A549 (cell line): ENCODE measurements at regions of chr15 and their contacts with region 1.

Region 1: DNA sequence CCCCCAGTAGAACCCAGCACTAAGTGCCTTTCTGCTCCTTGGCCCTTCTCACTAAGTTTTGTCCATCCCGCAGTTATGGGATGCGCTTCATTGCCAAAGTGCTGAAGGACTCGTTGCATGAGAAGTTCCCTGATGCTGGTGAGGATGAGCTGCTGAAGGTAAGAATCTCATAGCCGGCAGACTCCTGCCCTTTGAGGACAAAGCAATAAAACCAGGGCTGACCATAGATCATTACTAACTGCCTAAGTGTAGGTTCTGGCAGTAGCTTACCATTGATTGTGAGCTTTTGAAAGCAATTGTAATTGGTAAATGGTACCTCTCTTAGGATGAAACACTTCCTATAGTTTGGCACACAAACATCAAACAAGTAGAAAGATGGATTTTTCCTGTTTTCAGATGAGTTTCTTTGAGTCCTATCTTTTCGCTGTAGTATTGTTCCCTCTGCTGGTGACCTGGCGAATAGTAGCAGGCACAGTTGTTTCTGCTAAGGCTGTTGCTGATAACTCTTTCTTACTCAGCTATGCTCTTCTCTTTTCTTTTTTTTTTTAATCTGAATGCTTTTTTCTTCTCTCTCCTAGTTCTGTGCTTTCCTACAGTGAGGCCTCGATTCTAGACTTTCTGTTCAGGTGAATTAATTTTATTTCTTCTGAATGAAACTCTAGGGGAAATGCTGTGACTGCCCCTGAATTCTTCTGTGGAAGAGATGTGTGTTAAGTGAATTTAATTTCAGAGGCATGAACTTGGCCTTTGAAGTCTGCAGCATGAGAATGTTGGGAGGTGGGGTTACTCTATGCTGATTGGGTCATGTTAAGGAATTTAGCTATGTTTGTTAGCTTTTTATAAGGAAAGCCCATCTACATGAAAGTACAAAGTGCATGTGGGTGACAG is 47.4 kb upstream of the CRTC3 start:
- DNase-seq: peak; percentile 35 to 64
- ATAC-seq: peak; percentile 83 to 87; a peak in 5 of 6 replicates
- H3K4me3 ChIP-seq: no peak overlapping the region
- H3K27ac ChIP-seq: no peak overlapping the region
- H3K4me1 ChIP-seq: no peaks in the 10 kb centered on the region
- CTCF ChIP-seq: peak; percentile 98
- EP300 ChIP-seq: no peak
- POLR2A ChIP-seq: no peak
- RAD21 ChIP-seq: peak; percentile 98

Region 2: GRCh38 chr15:90143166-90143655 is 339.2 kb before region 1 on chr15:
- CTCF ChIA-PET with region 1: interaction called, 12 read pairs
- POLR2A ChIA-PET with region 1: no interaction called
- DNase-seq: peak; percentile 88 to 91
- ATAC-seq: peak; percentile 99
- H3K4me3 ChIP-seq: no peak overlapping the region
- H3K27ac ChIP-seq: peak overlapping the region; percentile 58 to 82
- H3K4me1 ChIP-seq: peaks cover 14% of the 10 kb centered on the region
- CTCF ChIP-seq: peak; percentile 99
- EP300 ChIP-seq: no peak
- POLR2A ChIP-seq: no peak
- RAD21 ChIP-seq: peak; percentile 99 to 100

Region 3: DNA sequence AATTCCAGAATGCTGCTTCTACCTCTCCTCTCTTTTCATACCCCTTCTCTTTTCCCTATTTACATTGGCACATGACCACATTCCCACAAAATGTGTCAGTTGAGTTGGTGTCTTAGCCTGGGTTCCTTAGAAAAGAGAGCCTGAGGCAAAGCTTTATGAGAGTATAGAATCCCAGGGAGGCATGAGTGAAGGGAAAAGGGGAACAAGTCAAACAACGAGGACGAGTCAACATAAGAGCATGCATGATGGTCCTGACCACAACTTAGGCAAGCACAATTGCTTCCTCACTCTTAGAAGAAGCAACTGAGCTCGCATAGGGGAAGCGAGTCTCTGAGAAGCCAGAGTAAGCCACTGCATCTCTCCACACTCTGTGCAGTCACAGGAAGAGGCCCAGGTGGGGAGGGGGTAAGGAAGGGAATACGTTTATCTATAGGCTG is 145.6 kb before region 1 on chr15:
- CTCF ChIA-PET with region 1: interaction called, 29 read pairs
- POLR2A ChIA-PET with region 1: no interaction called
- DNase-seq: peak in 1 of 2 experiments; percentile 69
- ATAC-seq: peak; percentile 60 to 86
- H3K4me3 ChIP-seq: no peak overlapping the region
- H3K27ac ChIP-seq: peak overlapping the region; percentile 39 to 63; a peak in 4 of 6 replicates
- H3K4me1 ChIP-seq: peaks cover 17% of the 10 kb centered on the region
- CTCF ChIP-seq: no peak
- EP300 ChIP-seq: no peak
- POLR2A ChIP-seq: no peak
- RAD21 ChIP-seq: no peak

Region 4: DNA sequence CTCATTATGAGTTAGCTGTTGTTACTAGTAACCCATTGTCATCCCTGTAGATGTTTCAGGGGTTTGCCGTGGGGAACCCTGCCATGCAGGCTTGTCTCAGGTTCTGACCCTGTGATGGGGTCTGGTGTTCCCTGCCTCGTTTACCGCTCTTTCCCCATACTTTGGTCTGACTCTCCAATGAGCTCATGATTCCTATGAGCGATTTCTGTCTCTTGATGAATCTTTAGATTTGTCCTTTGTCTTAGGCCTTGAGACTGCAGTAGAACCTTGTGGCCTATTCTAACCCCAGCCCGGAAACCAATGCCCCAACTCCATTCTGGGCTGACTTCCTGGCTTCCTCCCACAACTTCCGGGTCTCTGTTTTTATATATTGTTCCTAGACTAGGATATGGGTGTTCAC is 105.6 kb before region 1 on chr15:
- CTCF ChIA-PET with region 1: interaction called, 20 read pairs
- POLR2A ChIA-PET with region 1: no interaction called
- DNase-seq: no peak
- ATAC-seq: no peak
- H3K4me3 ChIP-seq: no peak overlapping the region
- H3K27ac ChIP-seq: no peak overlapping the region
- H3K4me1 ChIP-seq: peaks cover 3% of the 10 kb centered on the region; the same call in 1 of the 3 replicates
- CTCF ChIP-seq: no peak
- EP300 ChIP-seq: no peak
- POLR2A ChIP-seq: no peak
- RAD21 ChIP-seq: no peak

Region 5: DNA sequence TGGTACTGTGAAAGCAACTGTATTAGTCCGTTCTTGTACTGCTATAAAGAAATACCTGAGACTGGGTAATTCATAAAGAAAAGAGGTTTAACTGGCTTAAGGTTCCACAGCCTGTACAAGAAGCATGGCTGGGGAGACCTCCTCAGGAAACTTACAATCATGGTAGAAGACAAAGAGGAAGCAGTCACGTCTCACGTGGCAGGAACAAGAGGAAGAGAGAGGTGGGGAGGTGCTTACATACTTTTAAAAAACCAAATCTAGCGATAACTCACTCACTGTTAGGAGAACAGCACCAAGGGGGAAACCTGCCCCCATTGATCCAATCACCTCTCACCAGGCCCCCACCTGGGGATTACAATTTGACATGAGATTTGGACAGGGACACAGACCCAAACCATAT is 45.4 kb before region 1 on chr15:
- CTCF ChIA-PET with region 1: interaction called, 17 read pairs
- POLR2A ChIA-PET with region 1: no interaction called
- DNase-seq: no peak
- ATAC-seq: no peak
- H3K4me3 ChIP-seq: no peak overlapping the region
- H3K27ac ChIP-seq: no peak overlapping the region
- H3K4me1 ChIP-seq: no peaks in the 10 kb centered on the region
- CTCF ChIP-seq: no peak
- EP300 ChIP-seq: no peak
- POLR2A ChIP-seq: no peak
- RAD21 ChIP-seq: no peak

Region 6: GRCh38 chr15:90463381-90463780 is 19.0 kb before region 1 on chr15:
- CTCF ChIA-PET with region 1: interaction called, 46 read pairs
- POLR2A ChIA-PET with region 1: no interaction called
- DNase-seq: peak in 1 of 2 experiments; percentile 14
- ATAC-seq: peak; percentile 17 to 30; a peak in 2 of 6 replicates
- H3K4me3 ChIP-seq: no peak overlapping the region
- H3K27ac ChIP-seq: no peak overlapping the region
- H3K4me1 ChIP-seq: no peaks in the 10 kb centered on the region
- CTCF ChIP-seq: no peak
- EP300 ChIP-seq: no peak
- POLR2A ChIP-seq: no peak
- RAD21 ChIP-seq: no peak

Region 7: DNA sequence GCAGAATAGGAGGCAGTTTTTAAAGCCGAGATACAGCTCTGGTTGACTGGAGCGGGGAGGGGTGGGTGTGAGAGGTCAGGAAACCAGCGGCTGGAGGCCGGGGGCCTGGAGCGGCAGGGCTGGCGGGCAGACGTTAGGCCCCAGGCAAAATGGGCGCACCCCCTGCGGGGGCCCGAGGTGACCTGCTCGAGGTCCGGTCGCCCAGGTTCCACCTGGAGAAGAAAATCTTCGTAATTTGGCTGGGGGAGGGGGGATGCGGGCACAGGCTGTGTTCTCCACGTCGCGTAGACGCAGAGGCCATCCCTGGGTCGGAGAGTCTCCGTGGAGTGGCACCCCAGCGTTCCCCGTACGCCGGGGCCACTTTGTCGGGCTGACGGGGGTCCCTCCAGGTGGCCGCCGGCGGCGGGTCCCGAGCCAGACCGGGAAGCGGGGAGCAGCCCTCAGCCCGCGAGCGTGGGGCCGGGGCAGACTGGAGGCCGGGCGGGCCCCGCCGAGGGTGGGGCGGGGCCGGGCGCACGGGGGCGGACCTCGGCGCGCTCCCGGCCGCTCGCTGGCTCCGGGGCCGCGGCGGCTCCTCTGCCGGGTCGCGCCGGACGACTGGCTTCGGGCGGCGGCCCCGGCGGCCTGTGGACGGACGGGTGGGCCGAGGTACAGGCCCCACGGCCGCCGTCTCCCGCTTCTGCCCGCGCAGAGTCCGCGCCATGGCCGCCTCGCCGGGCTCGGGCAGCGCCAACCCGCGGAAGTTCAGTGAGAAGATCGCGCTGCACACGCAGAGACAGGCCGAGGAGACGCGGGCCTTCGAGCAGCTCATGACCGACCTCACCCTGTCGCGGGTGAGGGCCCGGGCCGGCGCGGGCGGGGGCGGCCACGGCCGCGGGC is 47.2 kb after region 1 on chr15 and contains the start of gene CRTC3:
- CTCF ChIA-PET with region 1: interaction called, 11 read pairs
- POLR2A ChIA-PET with region 1: interaction called, 3 read pairs
- DNase-seq: peak; percentile 68 to 74
- ATAC-seq: peak; percentile 90
- H3K4me3 ChIP-seq: peak within 1 kb of the TSS; percentile 66
- H3K27ac ChIP-seq: peak within 1 kb of the TSS; percentile 86 to 96
- H3K4me1 ChIP-seq: peaks cover 13% of the 10 kb centered on the region; the same call in 2 of the 3 replicates
- CTCF ChIP-seq: peak; percentile 32; the same call in 2 of the 3 replicates
- EP300 ChIP-seq: no peak
- POLR2A ChIP-seq: peak; percentile 82
- RAD21 ChIP-seq: no peak
- polyA plus RNA-seq, gene CRTC3: 28.6 and 30.5 TPM in 2 replicates